ENCODE measurements at regions of chr10 and their contacts with region 1.

Region 1: DNA sequence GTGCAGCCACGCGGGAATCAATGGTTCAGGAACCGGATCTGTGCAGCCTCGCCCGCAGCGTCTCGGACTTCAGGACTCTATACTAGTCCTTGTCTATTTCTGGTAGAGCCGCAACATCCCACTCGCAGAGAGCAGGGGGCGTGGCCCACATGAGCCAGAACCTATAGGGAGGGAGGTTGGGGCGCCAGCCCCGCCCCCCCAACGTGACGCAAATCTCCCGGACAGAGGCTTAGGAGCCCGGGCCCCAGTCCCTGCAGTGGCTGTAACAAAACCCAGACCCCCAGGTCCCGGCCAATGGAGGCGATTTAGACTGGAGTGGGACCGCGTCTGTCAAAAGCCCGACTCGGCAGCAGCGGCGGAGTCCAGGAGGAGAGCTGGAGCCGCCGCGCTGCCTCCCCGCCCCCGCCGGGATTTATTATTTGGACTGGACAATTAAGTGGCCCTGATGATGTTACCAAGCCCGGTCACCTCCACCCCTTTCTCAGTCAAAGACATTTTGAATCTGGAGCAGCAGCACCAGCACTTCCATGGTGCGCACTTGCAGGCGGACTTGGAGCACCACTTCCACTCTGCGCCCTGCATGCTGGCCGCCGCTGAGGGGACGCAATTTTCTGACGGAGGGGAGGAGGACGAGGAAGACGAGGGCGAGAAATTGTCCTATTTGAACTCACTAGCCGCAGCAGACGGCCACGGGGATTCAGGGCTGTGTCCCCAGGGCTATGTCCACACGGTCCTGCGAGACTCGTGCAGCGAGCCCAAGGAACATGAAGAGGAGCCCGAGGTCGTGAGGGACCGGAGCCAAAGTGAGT is at the start of gene NKX2-3:
- DNase-seq: peak; percentile 100
- H3K4me3 ChIP-seq: peak within 1 kb of the TSS; percentile 70 to 80 (median 78)
- H3K27ac ChIP-seq: peak within 1 kb of the TSS in 3 of 4 donors; percentile 94 to 95 (median 94)
- H3K4me1 ChIP-seq: peaks cover 3 to 36% (median 7%) of the 10 kb centered on the region in 4 donors
- H3K27me3 ChIP-seq: peaks cover 0 to 10% (median 0%) of the 10 kb centered on the region in 3 donors
- CTCF ChIP-seq: no peak
- EP300 ChIP-seq: peak in 1 of 4 donors; percentile 66
- POLR2A ChIP-seq: peak; percentile 89 to 93
- total RNA-seq, gene NKX2-3: 32.4 to 49.9 (median 34.1) TPM

Region 2: GRCh38 chr10:99430451-99431189 is 102.3 kb before region 1 on chr10 and contains the start of gene GOT1:
- intact Hi-C with region 1: loop called (anchors 5 kb)
- DNase-seq: peak; percentile 99
- H3K4me3 ChIP-seq: peak within 1 kb of the TSS; percentile 63 to 84 (median 72)
- H3K27ac ChIP-seq: peak within 1 kb of the TSS; percentile 90 to 97 (median 94)
- H3K4me1 ChIP-seq: peaks cover 0 to 52% (median 48%) of the 10 kb centered on the region in 4 donors
- H3K27me3 ChIP-seq: no peaks in the 10 kb centered on the region
- CTCF ChIP-seq: no peak
- EP300 ChIP-seq: peak in 2 of 4 donors; percentile 34 to 39
- POLR2A ChIP-seq: peak; percentile 95 to 96
- total RNA-seq, gene GOT1: 13.4 to 29.6 (median 15.4) TPM

Measured in sigmoid colon (tissue), 7 donors.